ENCODE measurements at regions of chr7 and their contacts with region 1.

Region 1: GRCh38 chr7:129468087-129468486 is 33.9 kb downstream of the STRIP2 start:
- DNase-seq: no peak
- ATAC-seq: peak; percentile 42

Region 2: GRCh38 chr7:129144095-129144833 is 323.8 kb before region 1 on chr7 and contains the start of gene TSPAN33:
- intact Hi-C with region 1: no loop called
- DNase-seq: peak; percentile 89
- ATAC-seq: peak; percentile 96
- total RNA-seq, gene TSPAN33: 11.8 TPM

Region 3: DNA sequence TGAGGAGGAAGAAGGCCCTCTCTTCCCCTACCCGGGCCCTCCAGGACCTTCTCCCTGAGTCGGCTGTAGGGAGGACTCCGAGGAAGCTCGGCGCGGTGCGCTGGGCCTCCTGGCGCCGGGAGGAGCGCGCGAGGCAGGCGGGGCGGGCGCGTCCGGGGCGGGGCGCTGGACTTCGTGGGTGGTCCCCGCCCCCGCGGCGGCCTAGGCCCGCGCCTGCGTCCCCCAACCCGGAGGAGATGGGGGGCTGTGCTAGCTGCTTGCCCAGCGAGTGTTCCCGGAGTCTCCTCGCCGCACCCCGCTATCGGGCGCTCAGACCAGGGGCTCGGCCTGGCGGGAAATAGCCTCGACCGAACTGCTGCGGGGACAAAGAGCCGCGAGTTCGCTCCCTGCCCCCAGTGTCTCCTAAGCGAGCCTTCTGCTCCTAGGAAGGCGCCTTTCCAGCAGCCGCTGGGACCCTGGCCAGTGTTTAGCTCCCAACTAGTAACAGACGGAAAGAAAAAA is 298.9 kb before region 1 on chr7:
- intact Hi-C with region 1: no loop called
- DNase-seq: peak; percentile 78
- ATAC-seq: peak; percentile 96

Region 4: GRCh38 chr7:129218514-129219062 is 249.5 kb before region 1 on chr7:
- intact Hi-C with region 1: loop called (anchors 5 kb)
- DNase-seq: peak; percentile 85
- ATAC-seq: peak; percentile 94

Region 5: GRCh38 chr7:129370812-129371211 is 97.3 kb before region 1 on chr7:
- intact Hi-C with region 1: loop called (anchors 2 kb)
- DNase-seq: no peak
- ATAC-seq: no peak

Region 6: GRCh38 chr7:129644634-129645230 is 176.6 kb after region 1 on chr7:
- intact Hi-C with region 1: no loop called
- DNase-seq: no peak
- ATAC-seq: peak; percentile 68